Posterior cingulate gyrus (tissue), 11 donors: ENCODE measurements at regions of chr11 and their contacts with region 1.

Region 1: GRCh38 chr11:83671289-83671688 is 385.1 kb upstream of the CCDC90B start:
- DNase-seq: no peak

Region 2: DNA sequence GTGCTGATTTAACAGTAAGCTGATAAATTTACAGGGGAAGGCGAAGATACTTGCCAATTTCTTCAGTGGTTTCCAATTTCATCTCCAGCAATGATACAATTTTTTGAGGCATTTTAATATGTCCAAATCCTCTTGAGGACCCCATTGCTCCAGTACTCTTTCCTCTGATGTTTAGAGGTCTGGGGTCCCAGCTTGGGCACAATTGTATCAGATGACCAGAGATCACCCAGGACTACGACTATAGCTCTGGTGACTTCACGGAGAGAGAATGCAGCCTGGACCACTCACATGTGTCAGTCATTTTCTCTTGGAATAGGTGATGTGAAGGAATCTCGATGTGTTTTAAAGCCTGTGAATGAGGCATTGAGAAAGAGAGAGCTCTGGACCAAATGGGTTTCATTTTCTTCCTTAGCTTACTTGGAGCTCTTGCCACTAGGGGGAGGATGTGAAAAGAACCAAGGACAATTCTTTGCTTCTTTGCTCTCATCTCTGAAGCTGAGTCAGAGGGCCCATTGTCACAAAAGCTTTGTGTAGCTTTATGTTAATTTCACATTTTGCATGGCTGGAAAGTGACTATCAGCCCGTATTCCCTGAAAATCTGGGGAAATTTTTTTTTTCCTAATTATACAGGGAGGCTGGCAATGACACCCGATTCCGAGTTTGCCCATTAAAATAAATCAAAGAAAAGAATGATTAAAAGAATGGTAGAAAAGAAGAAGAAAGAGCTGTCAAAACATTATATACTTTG is 378.4 kb before region 1 on chr11:
- intact Hi-C with region 1: loop called (anchors 5 kb)
- DNase-seq: peak in 2 of 10 donors; percentile 8 to 44